ENCODE measurements at regions of chr17 and their contacts with region 1.

Region 1: GRCh38 chr17:49230636-49231562 is at the start of gene PHOSPHO1:
- DNase-seq: peak; percentile 92
- CTCF ChIP-seq: no peak

Region 2: GRCh38 chr17:49210158-49211029 is 20.5 kb before region 1 on chr17 and contains the starts of genes ABI3 and GNGT2:
- CTCF ChIA-PET with region 1: interaction called, 143 read pairs
- POLR2A ChIA-PET with region 1: interaction called, 3 read pairs
- DNase-seq: peak; percentile 93
- CTCF ChIP-seq: no peak